GM12878 (cell line): ENCODE measurements at regions of chr20 and their contacts with region 1.

Region 1: DNA sequence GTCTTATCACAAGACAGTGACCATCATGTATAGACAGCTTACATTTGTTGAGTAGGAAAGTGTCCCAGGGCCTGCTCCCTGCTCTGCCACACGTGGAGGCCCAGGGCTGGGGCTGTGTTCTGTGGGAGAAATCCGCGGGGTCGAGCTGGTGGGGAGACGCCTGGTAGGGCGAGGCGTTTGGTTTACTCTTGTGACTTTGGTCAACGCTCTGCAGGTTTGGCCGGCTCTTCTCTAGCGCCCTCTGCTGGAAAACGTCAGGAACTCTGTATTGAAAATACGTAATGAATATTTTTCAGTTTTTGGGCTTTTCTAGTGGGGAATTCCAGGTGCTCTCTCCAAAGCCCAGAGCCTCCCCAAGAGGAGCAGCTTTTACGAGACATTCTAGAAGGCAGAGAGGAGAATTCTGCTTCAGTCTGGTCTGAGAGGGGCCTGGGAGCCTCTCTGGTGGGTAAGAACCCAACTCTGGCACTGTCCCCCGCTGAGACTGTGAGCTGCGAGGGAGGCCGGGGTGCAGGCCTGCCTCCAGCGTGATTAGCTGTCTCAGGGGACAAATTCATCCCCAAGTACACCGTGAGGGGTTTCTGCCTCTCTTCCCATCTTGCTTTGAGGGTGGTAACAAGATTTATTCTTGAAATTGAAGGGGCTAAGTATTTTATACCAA is 112.6 kb upstream of the RALGAPA2 start:
- DNase-seq: peak; percentile 11
- ATAC-seq: peak; percentile 93
- H3K4me3 ChIP-seq: no peak overlapping the region
- H3K27ac ChIP-seq: no peak overlapping the region
- H3K4me1 ChIP-seq: no peaks in the 10 kb centered on the region
- H3K27me3 ChIP-seq: no peaks in the 10 kb centered on the region
- CTCF ChIP-seq: peak; percentile 81 to 89 (median 82)
- EP300 ChIP-seq: no peak
- POLR2A ChIP-seq: no peak
- RAD21 ChIP-seq: peak; percentile 91

Region 2: GRCh38 chr20:20083807-20084206 is 741.2 kb before region 1 on chr20:
- CTCF ChIA-PET with region 1: no interaction called
- POLR2A ChIA-PET with region 1: no interaction called
- RAD21 ChIA-PET with region 1: interaction called, 3 read pairs
- SMC1A ChIA-PET with region 1: no interaction called
- in situ Hi-C with region 1: no loop called
- intact Hi-C with region 1: loop called (anchors 5 kb)
- DNase-seq: peak; percentile 2
- ATAC-seq: peak; percentile 81
- H3K4me3 ChIP-seq: no peak overlapping the region
- H3K27ac ChIP-seq: no peak overlapping the region
- H3K4me1 ChIP-seq: no peaks in the 10 kb centered on the region
- H3K27me3 ChIP-seq: no peaks in the 10 kb centered on the region; a peak in 2 of 4 replicates
- CTCF ChIP-seq: peak; percentile 31 to 56 (median 43); a peak in 4 of 6 replicates
- EP300 ChIP-seq: no peak
- POLR2A ChIP-seq: no peak
- RAD21 ChIP-seq: peak; percentile 69

Region 3: DNA sequence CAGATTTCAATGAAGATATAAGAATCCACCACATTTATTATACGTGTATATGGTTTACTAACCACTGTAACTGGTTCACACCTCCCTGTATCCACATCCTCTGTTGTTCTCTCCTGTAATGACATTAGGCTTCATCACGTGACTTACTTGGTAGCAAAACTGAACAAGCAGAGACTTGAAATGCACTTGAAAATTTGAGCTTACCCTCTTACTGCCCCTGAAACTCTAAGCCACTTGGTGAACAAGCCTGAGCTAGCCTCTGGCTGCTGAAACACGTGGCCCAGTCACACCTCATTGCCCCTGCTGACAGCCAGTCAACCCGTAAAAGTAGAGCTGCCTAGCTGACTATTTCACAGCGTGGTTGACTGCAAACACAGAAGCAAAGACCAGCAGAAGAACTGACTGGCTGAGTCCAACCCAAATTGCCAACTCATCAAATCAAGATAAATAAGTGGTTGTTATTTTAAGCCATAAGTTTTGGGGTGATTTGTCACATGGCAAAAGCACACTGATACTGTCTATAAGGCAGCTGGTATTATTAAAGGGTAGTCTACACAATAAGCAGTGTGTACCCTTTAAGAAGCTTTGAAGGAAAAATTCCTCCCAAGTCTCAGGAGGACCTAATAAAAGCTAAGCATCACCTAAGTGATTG is 221.6 kb before region 1 on chr20:
- CTCF ChIA-PET with region 1: interaction called, 10 read pairs
- POLR2A ChIA-PET with region 1: no interaction called
- RAD21 ChIA-PET with region 1: interaction called, 3 read pairs
- SMC1A ChIA-PET with region 1: interaction called, 4 read pairs
- in situ Hi-C with region 1: no loop called
- intact Hi-C with region 1: no loop called
- DNase-seq: peak; percentile 95
- ATAC-seq: peak; percentile 100
- H3K4me3 ChIP-seq: no peak overlapping the region
- H3K27ac ChIP-seq: peak overlapping the region; percentile 83
- H3K4me1 ChIP-seq: peaks cover 19% of the 10 kb centered on the region
- H3K27me3 ChIP-seq: no peaks in the 10 kb centered on the region
- CTCF ChIP-seq: no peak
- EP300 ChIP-seq: peak; percentile 47 to 80; a peak in 2 of 4 replicates
- POLR2A ChIP-seq: 0 out of 2 replicates have a peak, but pooled peaks have one; percentile 25
- RAD21 ChIP-seq: no peak

Region 4: DNA sequence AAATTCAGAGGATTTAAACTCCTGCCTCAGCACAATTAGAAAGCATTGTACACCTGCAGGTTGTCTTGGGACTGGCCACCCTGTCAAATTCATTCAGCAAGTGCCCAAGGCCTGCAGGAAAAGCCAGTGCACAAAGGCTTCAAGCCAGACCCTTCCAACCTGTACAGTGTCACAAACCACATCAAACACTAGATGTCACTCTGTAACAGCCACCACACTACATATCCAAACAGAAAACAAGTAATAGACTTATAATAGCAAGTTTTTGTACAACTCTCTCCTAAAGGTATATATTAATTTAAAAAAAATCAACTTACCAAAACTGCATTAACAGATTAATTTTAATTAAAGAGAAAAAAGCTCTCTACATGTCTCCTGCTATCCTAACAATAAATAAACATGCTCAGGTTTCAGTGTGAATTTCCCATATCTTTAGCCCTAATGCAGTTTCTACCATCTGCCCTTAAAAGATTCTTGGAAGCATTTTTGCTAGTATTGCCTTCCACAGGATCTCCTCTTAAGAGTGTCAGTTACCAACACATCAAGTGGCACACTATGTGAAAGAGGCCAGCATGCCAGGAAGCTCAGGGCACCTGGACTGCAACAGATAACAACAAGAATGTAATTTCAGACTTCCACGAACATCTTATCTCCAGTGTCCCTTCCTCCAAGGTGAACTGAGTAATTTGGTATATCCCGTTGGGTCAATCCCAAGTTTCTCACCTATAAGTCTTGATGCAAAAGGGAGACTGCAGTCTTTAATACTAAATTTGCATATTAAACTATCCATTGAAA is 160.1 kb before region 1 on chr20:
- CTCF ChIA-PET with region 1: interaction called, 115 read pairs
- POLR2A ChIA-PET with region 1: no interaction called
- RAD21 ChIA-PET with region 1: interaction called, 36 read pairs
- SMC1A ChIA-PET with region 1: interaction called, 32 read pairs
- in situ Hi-C with region 1: loop called (anchors 5 kb)
- intact Hi-C with region 1: loop called (anchors 1 kb)
- DNase-seq: no peak
- ATAC-seq: peak; percentile 81
- H3K4me3 ChIP-seq: no peak overlapping the region
- H3K27ac ChIP-seq: no peak overlapping the region
- H3K4me1 ChIP-seq: peaks cover 17% of the 10 kb centered on the region
- H3K27me3 ChIP-seq: no peaks in the 10 kb centered on the region
- CTCF ChIP-seq: peak; percentile 38 to 70 (median 66); a peak in 5 of 6 replicates
- EP300 ChIP-seq: no peak
- POLR2A ChIP-seq: no peak
- RAD21 ChIP-seq: peak; percentile 92

Region 5: DNA sequence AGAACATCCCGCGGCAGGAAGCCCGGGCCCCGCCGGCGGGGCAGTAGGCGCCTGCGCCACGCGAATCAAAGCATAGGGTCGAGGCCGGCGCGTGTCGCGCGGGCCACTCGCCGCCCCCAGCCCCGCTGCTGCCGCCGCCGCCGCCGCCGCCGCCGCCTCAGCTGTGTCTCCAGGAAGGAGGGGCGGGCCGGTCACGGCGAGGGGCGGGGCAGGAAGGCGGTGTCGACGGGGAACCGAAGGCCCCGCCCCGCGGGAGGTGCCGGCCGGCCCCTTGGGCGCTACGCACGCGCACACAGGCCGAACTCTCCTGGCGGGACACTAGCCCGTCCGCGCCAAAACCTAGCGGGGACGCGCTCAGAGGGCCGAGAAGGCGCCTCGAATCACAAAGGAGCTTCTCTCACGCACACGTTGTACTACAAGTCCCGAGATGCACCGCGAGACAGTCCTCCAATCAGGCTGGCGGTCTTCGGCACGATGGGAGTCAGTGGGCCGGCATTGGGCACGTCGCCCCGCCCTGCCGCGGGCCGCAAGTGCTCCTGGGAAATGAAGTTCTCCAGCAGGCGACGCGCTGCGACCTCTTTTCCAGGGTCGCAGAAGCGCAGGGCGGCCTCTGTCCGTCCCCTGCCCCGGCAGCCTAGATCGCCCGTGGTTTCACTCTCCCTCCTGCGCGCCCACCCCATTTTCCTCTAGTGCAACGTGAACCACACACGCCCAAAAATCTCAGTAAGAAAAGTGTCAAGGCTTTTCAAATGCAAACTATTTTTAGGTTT is 112.4 kb before region 1 on chr20 and contains the start of gene RALGAPA2:
- CTCF ChIA-PET with region 1: interaction called, 8 read pairs
- POLR2A ChIA-PET with region 1: interaction called, 3 read pairs
- RAD21 ChIA-PET with region 1: interaction called, 11 read pairs
- SMC1A ChIA-PET with region 1: interaction called, 8 read pairs
- in situ Hi-C with region 1: no loop called
- intact Hi-C with region 1: no loop called
- DNase-seq: peak; percentile 94
- ATAC-seq: peak; percentile 97
- H3K4me3 ChIP-seq: peak within 1 kb of the TSS; percentile 86
- H3K27ac ChIP-seq: peak within 1 kb of the TSS; percentile 66
- H3K4me1 ChIP-seq: peaks cover 6% of the 10 kb centered on the region; the same call in 1 of the 2 replicates
- H3K27me3 ChIP-seq: no peaks in the 10 kb centered on the region
- CTCF ChIP-seq: peak in 1 of 3 experiments; percentile 16; a peak in 1 of 6 replicates
- EP300 ChIP-seq: no peak
- POLR2A ChIP-seq: peak; percentile 63
- RAD21 ChIP-seq: no peak
- polyA plus RNA-seq, gene RALGAPA2: 2.9 to 4.0 TPM

Region 6: DNA sequence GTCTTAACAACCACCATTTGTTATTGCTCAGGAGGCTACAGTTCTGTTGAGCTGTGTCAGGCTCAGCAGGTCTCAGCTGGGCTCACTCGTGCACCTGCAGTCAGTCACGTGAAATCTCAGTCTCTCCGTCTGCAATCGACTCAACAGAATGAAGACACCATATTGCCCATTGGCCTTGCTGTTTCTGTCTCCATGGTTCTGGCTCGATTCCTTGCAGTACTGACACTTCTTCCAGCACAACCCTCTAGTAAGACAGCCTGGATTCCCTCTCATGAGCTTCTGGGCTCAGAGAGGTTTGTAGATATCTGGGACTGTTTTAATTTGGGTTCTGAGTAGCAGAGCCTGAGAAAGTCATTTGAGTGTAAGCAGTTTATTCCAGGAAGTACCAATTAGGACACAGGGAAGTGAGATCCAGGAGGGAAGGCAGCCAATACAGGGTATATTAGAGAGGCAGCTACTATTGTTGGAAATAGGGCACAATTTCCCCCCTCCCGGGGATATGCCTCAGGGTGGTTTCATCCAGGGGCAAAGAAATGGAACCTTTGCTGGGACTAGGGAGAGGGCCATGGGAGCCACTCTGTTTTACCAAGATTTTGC is 25.2 kb before region 1 on chr20:
- CTCF ChIA-PET with region 1: interaction called, 10 read pairs
- POLR2A ChIA-PET with region 1: no interaction called
- RAD21 ChIA-PET with region 1: interaction called, 3 read pairs
- SMC1A ChIA-PET with region 1: interaction called, 3 read pairs
- in situ Hi-C with region 1: no loop called
- intact Hi-C with region 1: no loop called
- DNase-seq: no peak
- ATAC-seq: no peak
- H3K4me3 ChIP-seq: no peak overlapping the region
- H3K27ac ChIP-seq: no peak overlapping the region
- H3K4me1 ChIP-seq: no peaks in the 10 kb centered on the region
- H3K27me3 ChIP-seq: no peaks in the 10 kb centered on the region; a peak in 1 of 4 replicates
- CTCF ChIP-seq: no peak
- EP300 ChIP-seq: no peak
- POLR2A ChIP-seq: no peak
- RAD21 ChIP-seq: no peak

Region 7: GRCh38 chr20:20881808-20882207 is 56.8 kb after region 1 on chr20:
- CTCF ChIA-PET with region 1: no interaction called
- POLR2A ChIA-PET with region 1: no interaction called
- RAD21 ChIA-PET with region 1: no interaction called
- SMC1A ChIA-PET with region 1: no interaction called
- in situ Hi-C with region 1: no loop called
- intact Hi-C with region 1: no loop called
- DNase-seq: no peak
- ATAC-seq: no peak
- H3K4me3 ChIP-seq: no peak overlapping the region
- H3K27ac ChIP-seq: no peak overlapping the region
- H3K4me1 ChIP-seq: no peaks in the 10 kb centered on the region
- H3K27me3 ChIP-seq: no peaks in the 10 kb centered on the region; a peak in 2 of 4 replicates
- CTCF ChIP-seq: no peak
- EP300 ChIP-seq: no peak
- POLR2A ChIP-seq: no peak
- RAD21 ChIP-seq: no peak